ENCODE measurements at regions of chr9 and their contacts with region 1.

Region 1: DNA sequence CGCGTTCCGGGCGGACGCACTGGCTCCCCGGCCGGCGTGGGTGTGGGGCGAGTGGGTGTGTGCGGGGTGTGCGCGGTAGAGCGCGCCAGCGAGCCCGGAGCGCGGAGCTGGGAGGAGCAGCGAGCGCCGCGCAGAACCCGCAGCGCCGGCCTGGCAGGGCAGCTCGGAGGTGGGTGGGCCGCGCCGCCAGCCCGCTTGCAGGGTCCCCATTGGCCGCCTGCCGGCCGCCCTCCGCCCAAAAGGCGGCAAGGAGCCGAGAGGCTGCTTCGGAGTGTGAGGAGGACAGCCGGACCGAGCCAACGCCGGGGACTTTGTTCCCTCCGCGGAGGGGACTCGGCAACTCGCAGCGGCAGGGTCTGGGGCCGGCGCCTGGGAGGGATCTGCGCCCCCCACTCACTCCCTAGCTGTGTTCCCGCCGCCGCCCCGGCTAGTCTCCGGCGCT is at the start of gene DAPK1:
- DNase-seq: peak; percentile 43 to 81 (median 50)
- ATAC-seq: peak in 3 of 4 donors; percentile 77 to 83 (median 83)
- H3K4me3 ChIP-seq: peak within 1 kb of the TSS; percentile 45 to 74 (median 60)
- H3K27ac ChIP-seq: peak within 1 kb of the TSS in 10 of 12 donors; percentile 16 to 90 (median 60)
- H3K4me1 ChIP-seq: peaks cover 0 to 56% (median 2%) of the 10 kb centered on the region in 12 donors
- H3K27me3 ChIP-seq: peaks cover 0 to 50% (median 20%) of the 10 kb centered on the region in 9 donors
- CTCF ChIP-seq: peak in 2 of 12 donors; percentile 6 to 23
- POLR2A ChIP-seq: no peak
- total RNA-seq, gene DAPK1: 1.5 to 52.5 (median 2.7) TPM

Region 2: DNA sequence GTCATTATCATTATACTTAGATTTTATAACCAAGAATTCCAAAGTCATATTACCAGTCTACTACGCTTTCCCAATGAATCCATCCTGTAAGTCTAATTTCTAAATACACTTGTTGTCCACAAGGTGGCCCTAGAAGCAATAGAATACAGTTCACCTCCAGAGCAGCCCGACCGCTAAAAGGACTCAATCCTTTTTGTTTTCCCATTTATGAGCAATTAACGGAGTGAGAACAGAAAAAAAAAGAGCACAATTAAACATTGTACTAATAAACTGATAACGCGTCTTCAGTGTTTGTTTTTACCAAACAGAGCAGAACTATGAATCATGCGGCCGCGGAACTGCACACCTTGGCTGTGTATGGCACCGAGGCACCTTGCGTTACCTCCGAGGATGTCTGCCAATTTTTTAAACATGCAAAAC is 160.7 kb before region 1 on chr9:
- intact Hi-C with region 1: loop called in 1 of 10 experiments (anchors 10 kb)
- DNase-seq: peak in 1 of 5 donors; percentile 18
- ATAC-seq: peak; percentile 20 to 75 (median 64)
- H3K4me3 ChIP-seq: peak overlapping the region in 10 of 12 donors; percentile 11 to 52 (median 30)
- H3K27ac ChIP-seq: no peak overlapping the region
- H3K4me1 ChIP-seq: peaks cover 0 to 10% (median 3%) of the 10 kb centered on the region in 12 donors
- H3K27me3 ChIP-seq: peaks cover 0 to 28% (median 11%) of the 10 kb centered on the region in 9 donors
- CTCF ChIP-seq: peak; percentile 44 to 78 (median 68)
- POLR2A ChIP-seq: no peak

Region 3: GRCh38 chr9:87640385-87640795 is 142.8 kb after region 1 on chr9:
- intact Hi-C with region 1: loop called in 1 of 10 experiments (anchors 10 kb)
- DNase-seq: no peak
- ATAC-seq: peak in 2 of 4 donors; percentile 57 to 68
- H3K4me3 ChIP-seq: no peak overlapping the region
- H3K27ac ChIP-seq: peak overlapping the region in 1 of 12 donors; percentile 44
- H3K4me1 ChIP-seq: peaks cover 0 to 12% (median 0%) of the 10 kb centered on the region in 12 donors
- H3K27me3 ChIP-seq: no peaks in the 10 kb centered on the region
- CTCF ChIP-seq: no peak
- POLR2A ChIP-seq: no peak

Region 4: DNA sequence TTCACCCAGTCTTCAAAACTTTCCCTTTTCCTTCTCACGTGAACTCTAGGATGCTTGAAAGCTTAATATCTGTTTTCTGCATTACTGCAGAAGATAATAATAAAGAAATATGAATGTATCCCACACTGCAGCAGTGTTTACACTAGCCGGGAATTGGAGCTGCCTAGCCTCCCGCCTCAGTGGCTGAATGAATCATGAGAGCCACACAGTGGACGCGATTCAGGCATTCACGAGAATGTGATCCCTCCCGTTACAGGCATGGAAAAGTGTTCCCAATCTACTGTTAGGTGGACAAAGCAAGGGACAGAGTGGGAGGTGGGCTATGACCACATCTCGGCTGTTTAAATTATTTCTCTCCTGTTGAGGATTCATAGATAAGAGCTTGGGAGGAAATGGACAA is 158.9 kb after region 1 on chr9:
- intact Hi-C with region 1: loop called in 2 of 10 experiments (anchors 5 to 10 kb)
- DNase-seq: no peak
- ATAC-seq: peak in 1 of 4 donors; percentile 34
- H3K4me3 ChIP-seq: no peak overlapping the region
- H3K27ac ChIP-seq: peak overlapping the region in 1 of 12 donors; percentile 50
- H3K4me1 ChIP-seq: peaks cover 0 to 23% (median 0%) of the 10 kb centered on the region in 12 donors
- H3K27me3 ChIP-seq: peaks cover 0 to 3% (median 0%) of the 10 kb centered on the region in 9 donors
- CTCF ChIP-seq: peak in 2 of 12 donors; percentile 21 to 23
- POLR2A ChIP-seq: no peak

Region 5: GRCh38 chr9:87662808-87663528 is 165.3 kb after region 1 on chr9:
- intact Hi-C with region 1: loop called in 2 of 10 experiments (anchors 5 to 10 kb)
- DNase-seq: peak; percentile 59 to 86 (median 67)
- ATAC-seq: peak; percentile 58 to 89 (median 72)
- H3K4me3 ChIP-seq: no peak overlapping the region
- H3K27ac ChIP-seq: no peak overlapping the region
- H3K4me1 ChIP-seq: no peaks in the 10 kb centered on the region
- H3K27me3 ChIP-seq: peaks cover 0 to 5% (median 0%) of the 10 kb centered on the region in 9 donors
- CTCF ChIP-seq: peak; percentile 65 to 84 (median 74)
- POLR2A ChIP-seq: no peak

Measured in heart left ventricle (tissue), 16 donors.